Pancreas (tissue), 10 donors: ENCODE measurements at regions of chr10 and their contacts with region 1.

Region 1: GRCh38 chr10:132387764-132388210 is 9.2 kb upstream of the PWWP2B start:
- DNase-seq: peak; percentile 60 to 95 (median 80)
- ATAC-seq: peak in 3 of 4 donors; percentile 70 to 74 (median 72)
- H3K4me3 ChIP-seq: no peak overlapping the region
- H3K27ac ChIP-seq: no peak overlapping the region
- H3K4me1 ChIP-seq: peaks cover 10% of the 10 kb centered on the region in 3 donors
- H3K27me3 ChIP-seq: no peaks in the 10 kb centered on the region
- CTCF ChIP-seq: peak; percentile 50 to 62 (median 54)

Region 2: GRCh38 chr10:132193907-132194552 is 193.8 kb before region 1 on chr10:
- intact Hi-C with region 1: no loop called
- DNase-seq: peak in 3 of 6 donors; percentile 26 to 68 (median 67)
- ATAC-seq: peak in 3 of 4 donors; percentile 59 to 88 (median 59)
- H3K4me3 ChIP-seq: no peak overlapping the region
- H3K27ac ChIP-seq: no peak overlapping the region
- H3K4me1 ChIP-seq: no peaks in the 10 kb centered on the region
- H3K27me3 ChIP-seq: no peaks in the 10 kb centered on the region
- CTCF ChIP-seq: no peak

Region 3: DNA sequence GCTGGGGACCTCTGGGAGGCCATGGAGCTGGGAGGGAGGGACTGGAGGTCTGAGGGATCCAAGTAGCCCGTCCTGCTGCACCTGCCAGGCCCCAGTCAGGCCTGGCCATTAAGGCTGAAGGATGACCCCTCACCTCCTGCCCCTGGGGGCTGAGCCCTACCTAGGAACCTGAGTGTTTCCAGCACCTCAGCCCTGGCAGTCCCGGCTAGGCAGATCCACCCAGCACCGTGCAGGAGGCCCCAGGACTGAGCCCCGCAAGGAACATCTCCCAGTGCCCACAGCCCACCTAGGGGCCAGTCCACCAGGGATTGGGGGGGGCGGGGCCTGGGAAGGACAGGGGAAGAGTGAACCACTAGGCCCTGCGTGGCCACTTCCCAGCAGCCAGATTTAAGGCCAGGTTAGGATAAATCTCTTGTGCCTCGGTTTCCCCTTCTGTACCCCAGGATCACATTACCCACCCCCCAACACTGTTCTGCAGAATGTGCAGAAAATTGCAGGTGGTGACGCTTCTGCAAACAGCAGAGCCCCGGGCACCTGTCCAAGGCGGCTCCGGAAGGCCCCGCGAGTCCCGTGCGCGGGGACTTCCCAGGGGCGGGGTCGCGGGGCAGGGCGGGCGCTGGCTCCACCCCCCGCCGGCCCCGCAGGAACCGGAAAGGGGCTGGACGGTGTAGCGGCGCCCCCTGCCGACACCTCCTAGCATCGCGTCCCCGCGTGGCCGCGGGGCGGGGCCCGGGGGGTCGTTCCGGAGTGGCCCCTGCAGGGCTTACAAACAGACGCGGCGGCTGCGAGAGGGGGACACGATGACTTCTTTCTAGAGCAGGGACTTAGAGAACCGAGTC is 65.1 kb after region 1 on chr10:
- intact Hi-C with region 1: loop called (anchors 5 kb)
- DNase-seq: peak; percentile 92 to 99 (median 96)
- ATAC-seq: peak; percentile 78 to 90 (median 87)
- H3K4me3 ChIP-seq: peak overlapping the region in 2 of 4 donors; percentile 5 to 34
- H3K27ac ChIP-seq: peak overlapping the region in 3 of 4 donors; percentile 25 to 51 (median 50)
- H3K4me1 ChIP-seq: peaks cover 18 to 22% (median 19%) of the 10 kb centered on the region in 3 donors
- H3K27me3 ChIP-seq: no peaks in the 10 kb centered on the region
- CTCF ChIP-seq: peak; percentile 98 to 99 (median 99)

Region 4: DNA sequence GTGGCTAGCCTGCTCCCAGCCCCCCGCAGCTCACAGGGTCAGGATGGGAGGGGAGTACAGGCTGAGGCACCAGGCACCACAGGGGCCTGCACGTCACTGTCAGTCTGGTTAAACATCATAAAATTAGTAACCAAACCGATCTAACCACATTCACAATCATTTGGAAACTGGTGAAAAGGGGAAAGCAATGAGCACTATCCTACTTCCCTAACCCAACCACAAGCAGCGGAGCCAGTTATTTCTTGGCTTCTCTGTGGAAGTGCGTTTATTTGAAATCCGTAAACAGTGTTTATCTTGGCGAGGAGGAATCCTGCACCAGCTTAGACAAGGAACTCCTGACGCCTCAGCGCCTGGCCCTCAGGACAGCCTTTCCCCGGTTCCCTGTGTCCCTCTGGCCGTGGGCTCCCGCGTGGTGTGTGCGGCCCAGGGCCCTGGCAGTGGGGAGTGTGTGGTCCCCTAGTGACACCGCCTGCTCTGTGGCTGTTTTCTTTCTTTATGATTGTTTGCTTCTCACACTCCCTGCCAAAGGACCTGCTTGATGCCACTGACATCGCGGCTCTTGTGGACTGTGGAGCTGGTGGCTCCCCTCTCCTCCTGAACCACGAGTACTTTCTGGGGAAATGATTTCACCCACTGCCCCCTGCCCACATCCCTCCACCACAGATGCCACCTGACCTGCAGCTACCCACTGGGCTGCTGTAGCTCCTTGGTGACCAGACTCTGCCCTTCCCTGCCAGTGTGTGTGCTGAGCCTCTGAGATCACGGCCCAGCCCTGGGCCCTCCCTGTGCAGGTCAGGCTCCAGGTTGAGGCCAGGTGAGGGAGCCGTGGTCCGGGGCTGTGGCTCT is 187.8 kb after region 1 on chr10:
- intact Hi-C with region 1: loop called in 1 of 3 experiments (anchors 5 kb)
- DNase-seq: peak in 3 of 6 donors; percentile 32 to 49 (median 36)
- ATAC-seq: peak; percentile 17 to 67 (median 56)
- H3K4me3 ChIP-seq: no peak overlapping the region
- H3K27ac ChIP-seq: peak overlapping the region; percentile 36 to 58 (median 58)
- H3K4me1 ChIP-seq: peaks cover 46 to 52% (median 47%) of the 10 kb centered on the region in 3 donors
- H3K27me3 ChIP-seq: no peaks in the 10 kb centered on the region
- CTCF ChIP-seq: no peak

Region 5: GRCh38 chr10:132643709-132644526 is 256.1 kb after region 1 on chr10:
- intact Hi-C with region 1: loop called in 2 of 3 experiments (anchors 10 kb)
- DNase-seq: peak in 1 of 6 donors; percentile 54
- ATAC-seq: no peak
- H3K4me3 ChIP-seq: no peak overlapping the region
- H3K27ac ChIP-seq: no peak overlapping the region
- H3K4me1 ChIP-seq: no peaks in the 10 kb centered on the region
- H3K27me3 ChIP-seq: no peaks in the 10 kb centered on the region
- CTCF ChIP-seq: no peak